ENCODE measurements at regions of chr1 and their contacts with region 1.

Region 1: DNA sequence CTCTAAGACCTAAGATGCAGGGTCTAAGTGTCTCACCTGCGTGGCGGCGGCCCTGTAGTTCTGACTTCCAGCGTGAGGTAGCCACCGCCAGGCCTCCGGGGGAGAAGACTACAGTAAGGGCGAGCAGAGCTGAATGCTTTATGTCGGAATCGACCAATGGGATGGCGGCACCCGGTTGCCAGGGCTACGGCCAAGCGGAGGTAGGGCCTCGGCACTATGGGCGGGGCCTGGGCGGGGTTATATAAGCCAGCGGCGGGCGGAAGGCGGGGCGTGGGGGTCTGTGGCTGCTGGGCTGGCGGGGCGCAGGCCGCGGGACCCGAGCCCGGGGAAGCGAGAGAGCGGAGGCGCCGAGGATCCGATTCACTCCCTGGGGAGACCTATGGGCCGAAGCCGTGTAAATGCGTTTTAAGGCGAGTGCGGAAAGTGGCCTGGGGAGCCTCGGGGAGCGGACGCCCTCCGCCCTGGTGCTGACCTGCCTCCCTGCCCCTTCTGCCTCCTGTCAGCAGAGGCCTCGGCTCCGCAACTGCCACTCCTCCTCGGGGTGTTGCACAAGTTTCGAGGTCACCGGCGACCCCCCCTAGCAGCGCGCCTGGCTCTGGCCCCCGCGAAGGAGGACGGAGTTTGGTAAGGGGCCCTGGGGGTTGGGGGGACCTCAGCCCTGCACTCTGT is at the start of gene AZIN2:
- DNase-seq: peak; percentile 98
- ATAC-seq: peak; percentile 99
- H3K4me3 Mint-ChIP-seq: peak within 1 kb of the TSS; percentile 72
- H3K27ac Mint-ChIP-seq: no peak within 1 kb of the TSS
- H3K4me1 Mint-ChIP-seq: peaks cover 18% of the 10 kb centered on the region
- H3K27me3 Mint-ChIP-seq: peaks cover 9% of the 10 kb centered on the region
- total RNA-seq, gene AZIN2: 7.8 to 19.4 TPM

Region 2: DNA sequence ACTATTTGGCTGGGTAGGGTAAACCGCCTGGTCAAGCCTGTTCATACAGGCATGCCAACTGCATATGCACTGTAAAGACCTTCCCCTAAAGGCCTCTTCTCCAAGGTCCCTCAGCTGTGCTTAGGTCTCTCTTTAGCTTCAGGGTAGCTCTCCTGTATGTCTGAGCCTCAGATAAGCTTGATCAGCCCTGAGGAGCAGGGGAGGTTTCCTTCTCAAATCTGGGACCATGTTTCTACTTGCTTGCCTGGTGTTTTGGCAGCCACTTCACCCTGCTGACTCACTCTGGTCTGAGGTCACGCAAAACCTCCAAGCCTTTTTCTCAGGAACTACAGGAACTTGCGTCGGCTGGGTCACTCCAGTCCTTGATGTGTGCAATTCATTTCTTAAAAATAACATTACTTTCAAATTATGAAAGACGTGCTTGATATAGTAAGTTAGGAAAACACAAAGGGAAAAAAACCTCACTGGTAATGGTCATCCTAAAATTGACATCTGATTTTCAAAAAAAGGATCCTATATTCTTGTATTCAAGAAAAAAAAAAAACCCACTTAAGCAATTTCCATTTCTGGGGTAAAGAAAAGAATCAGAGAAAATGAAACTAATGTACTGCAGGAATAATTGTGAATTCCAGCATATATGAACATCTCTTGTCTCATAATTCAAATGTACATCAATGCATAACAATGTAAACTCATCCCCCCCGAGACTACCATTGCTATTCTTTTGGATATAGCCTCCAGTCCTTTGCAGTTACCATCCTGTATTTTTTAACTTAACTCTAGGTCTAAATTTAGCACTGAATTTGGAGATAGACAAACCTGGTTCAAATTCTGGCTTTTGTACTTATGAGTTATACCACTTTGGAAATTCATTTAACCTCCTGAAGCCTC is 91.6 kb before region 1 on chr1:
- CTCF ChIA-PET with region 1: no interaction called
- DNase-seq: peak; percentile 83
- ATAC-seq: peak; percentile 59
- H3K4me3 Mint-ChIP-seq: peak overlapping the region; percentile 28
- H3K27ac Mint-ChIP-seq: peak overlapping the region; percentile 83
- H3K4me1 Mint-ChIP-seq: peaks cover 78% of the 10 kb centered on the region
- H3K27me3 Mint-ChIP-seq: no peaks in the 10 kb centered on the region

Region 3: GRCh38 chr1:33029209-33029608 is 51.8 kb before region 1 on chr1:
- CTCF ChIA-PET with region 1: no interaction called
- DNase-seq: no peak
- ATAC-seq: no peak
- H3K4me3 Mint-ChIP-seq: no peak overlapping the region
- H3K27ac Mint-ChIP-seq: no peak overlapping the region
- H3K4me1 Mint-ChIP-seq: peaks cover 76% of the 10 kb centered on the region
- H3K27me3 Mint-ChIP-seq: no peaks in the 10 kb centered on the region

Region 4: DNA sequence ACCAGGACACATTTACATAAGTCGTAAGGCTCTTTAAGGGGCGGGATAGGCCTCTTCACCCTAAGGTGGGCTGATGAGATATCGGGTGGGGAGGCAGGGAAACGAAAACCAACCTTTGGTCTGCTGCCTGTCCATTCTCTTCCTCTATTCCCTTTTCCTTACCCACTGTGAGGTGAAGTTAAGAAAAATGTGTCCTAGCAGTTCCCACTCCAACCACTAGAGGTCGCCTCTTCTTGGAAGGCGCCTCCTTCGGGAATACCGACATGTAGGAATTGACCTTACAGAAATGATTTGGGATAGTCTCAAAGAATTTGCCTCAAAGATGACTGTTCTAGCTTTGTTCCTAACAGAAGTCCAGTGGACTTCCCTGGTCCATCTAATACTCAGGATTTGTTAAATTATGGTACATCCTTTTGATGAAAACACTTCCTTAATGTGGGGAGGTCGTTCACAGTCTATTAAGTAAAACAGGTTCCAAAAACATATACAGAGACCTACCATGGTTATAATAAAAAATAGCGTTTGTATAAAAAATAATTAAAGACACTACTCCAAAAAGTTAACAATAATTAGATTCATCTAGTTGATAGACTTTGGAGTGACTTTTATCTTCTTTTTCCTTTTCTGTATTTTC is 14.1 kb after region 1 on chr1:
- CTCF ChIA-PET with region 1: interaction called, 113 read pairs
- DNase-seq: peak; percentile 44
- ATAC-seq: no peak
- H3K4me3 Mint-ChIP-seq: no peak overlapping the region
- H3K27ac Mint-ChIP-seq: no peak overlapping the region
- H3K4me1 Mint-ChIP-seq: peaks cover 78% of the 10 kb centered on the region
- H3K27me3 Mint-ChIP-seq: no peaks in the 10 kb centered on the region

Measured in activated CD8-positive, alpha-beta memory T cell treated with anti-CD3 and anti-CD28 coated beads, Interleukin-2, amount 10 ng/mL, durations not matched to agents 7 days and 5 days (primary cell).